ENCODE measurements at regions of chr13 and their contacts with region 1.

Region 1: DNA sequence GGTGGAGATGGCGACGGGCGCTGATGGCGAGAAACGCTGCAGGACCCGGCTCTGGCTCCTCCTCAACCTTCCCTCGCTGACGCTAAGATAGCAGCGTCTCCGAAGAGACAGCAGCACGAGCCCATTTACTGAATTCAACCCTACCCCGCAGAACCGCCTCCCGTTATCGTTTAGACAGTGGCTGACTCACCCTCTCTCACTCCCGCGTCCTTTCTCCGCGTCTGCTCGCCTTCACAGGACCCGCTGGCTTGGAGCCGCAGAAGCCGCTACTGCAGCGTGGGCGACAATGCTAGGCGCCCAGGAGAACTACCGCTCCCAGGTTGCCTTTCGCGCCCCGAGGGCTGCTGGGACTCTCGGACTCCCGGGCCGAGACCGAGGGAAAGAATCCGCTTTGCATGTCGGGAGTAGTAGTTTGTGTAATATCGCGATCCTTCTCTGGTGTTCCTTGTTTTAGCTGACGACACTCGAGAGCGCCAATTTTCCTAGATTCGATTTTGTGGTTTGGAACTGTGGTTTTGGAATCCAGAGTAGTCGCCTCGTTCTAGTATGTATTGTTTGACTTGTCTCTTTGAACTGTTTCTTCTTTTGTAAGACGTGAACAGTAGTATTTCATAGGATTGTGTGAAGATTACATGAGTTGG is at the start of gene KBTBD6:
- DNase-seq: peak; percentile 97
- H3K4me3 ChIP-seq: peak within 1 kb of the TSS; percentile 65 to 67
- H3K27ac ChIP-seq: peak within 1 kb of the TSS; percentile 79 to 80
- H3K4me1 ChIP-seq: peaks cover 3% of the 10 kb centered on the region
- H3K27me3 ChIP-seq: no peaks in the 10 kb centered on the region
- CTCF ChIP-seq: no peak
- POLR2A ChIP-seq: peak; percentile 47
- total RNA-seq, gene KBTBD6: 10.2 to 10.6 TPM

Region 2: DNA sequence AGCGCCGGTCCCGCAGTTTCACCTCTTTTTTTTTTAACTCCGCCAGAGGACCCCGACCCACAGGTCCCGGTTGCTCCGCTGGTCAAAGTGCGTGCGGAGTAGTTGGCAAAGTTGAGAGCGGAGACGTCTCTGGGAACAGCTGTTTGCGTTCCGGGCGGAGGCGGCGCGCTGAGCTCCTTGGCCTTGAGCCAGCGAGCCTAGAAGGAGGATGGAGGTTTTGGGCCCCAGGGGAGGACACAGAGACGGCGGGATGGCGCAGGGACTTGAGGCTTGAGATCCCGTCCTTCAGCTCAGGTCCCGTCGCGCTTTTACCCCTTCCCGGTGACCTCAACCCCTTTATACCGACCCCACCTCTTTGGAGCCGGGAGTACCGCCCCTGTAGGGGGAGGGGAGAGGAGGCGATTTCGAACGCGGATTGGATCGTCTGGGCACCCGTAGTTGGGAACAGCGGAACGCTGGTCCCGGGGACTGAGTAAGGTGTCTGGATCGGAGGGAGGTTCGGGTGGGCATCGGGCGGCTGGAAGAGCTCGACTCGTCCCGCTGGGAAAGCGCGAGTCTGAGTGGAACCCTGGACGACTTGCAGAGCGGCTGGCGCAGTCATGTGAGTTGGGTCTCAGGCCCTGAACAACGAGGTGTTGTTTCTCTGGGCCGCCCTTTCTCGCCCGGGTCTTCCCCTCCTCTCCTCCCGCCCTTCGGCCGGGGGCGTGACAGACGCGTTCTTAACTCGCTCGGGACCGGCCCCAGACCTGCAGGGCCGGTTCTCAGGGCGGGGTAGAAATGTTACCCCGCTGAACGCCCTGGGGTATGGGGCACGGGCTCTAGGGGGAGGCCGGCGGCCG is 71.3 kb before region 1 on chr13 and contains the start of gene WBP4:
- intact Hi-C with region 1: no loop called
- DNase-seq: peak; percentile 94
- H3K4me3 ChIP-seq: peak within 1 kb of the TSS; percentile 77 to 82
- H3K27ac ChIP-seq: peak within 1 kb of the TSS; percentile 97 to 98
- H3K4me1 ChIP-seq: peaks cover 11% of the 10 kb centered on the region
- H3K27me3 ChIP-seq: no peaks in the 10 kb centered on the region
- CTCF ChIP-seq: peak in 1 of 4 experiments; percentile 36
- POLR2A ChIP-seq: peak; percentile 48
- total RNA-seq, gene WBP4: 13.3 to 14.1 TPM

Region 3: DNA sequence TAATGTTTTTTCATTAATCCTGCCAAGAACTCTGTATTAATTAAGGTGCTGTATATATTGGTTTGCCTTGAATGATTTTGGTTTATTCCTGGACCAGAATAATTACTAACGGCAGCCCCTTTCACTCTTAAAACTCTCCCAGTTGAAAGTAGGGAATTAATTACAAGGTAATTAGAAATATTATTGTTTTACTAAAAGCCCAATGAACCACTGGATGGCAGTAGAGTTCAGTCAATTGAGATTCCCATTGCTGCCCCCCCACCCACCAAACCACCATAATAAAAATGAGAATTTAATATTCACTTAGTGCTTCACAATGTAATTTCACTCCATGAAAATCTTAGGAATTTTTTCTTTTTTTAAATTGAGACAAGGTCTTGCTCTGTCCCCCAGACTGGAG is 57.6 kb before region 1 on chr13:
- intact Hi-C with region 1: loop called (anchors 5 kb)
- DNase-seq: peak; percentile 14
- H3K4me3 ChIP-seq: no peak overlapping the region
- H3K27ac ChIP-seq: no peak overlapping the region
- H3K4me1 ChIP-seq: no peaks in the 10 kb centered on the region
- H3K27me3 ChIP-seq: no peaks in the 10 kb centered on the region
- CTCF ChIP-seq: peak in 3 of 4 experiments; percentile 47 to 59 (median 48)
- POLR2A ChIP-seq: no peak

Region 4: GRCh38 chr13:41193919-41194824 is 61.5 kb after region 1 on chr13 and contains the start of gene KBTBD7:
- intact Hi-C with region 1: loop called (anchors 2 kb)
- DNase-seq: peak; percentile 90
- H3K4me3 ChIP-seq: peak within 1 kb of the TSS; percentile 56 to 66
- H3K27ac ChIP-seq: peak within 1 kb of the TSS; percentile 81
- H3K4me1 ChIP-seq: peaks cover 2% of the 10 kb centered on the region
- H3K27me3 ChIP-seq: no peaks in the 10 kb centered on the region
- CTCF ChIP-seq: peak in 2 of 4 experiments; percentile 22 to 33
- POLR2A ChIP-seq: peak; percentile 50
- total RNA-seq, gene KBTBD7: 10.5 to 13.2 TPM

Region 5: DNA sequence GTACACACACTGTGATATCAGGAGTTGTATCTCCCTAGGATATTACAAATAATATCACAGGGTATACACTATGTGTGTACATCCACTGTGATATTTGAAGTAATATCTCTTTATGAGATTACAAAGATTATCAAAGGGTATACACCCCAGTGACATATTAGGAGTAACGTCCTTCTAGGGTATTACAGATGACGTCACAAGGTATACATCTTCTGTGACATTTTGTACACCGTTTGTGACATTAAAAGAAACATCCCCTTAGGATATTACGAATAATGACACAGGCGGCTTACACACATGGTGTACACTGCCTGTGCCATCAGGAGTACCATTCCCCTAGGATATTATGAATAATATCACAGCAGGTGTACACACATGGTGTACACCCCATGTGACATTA is 311.3 kb after region 1 on chr13:
- intact Hi-C with region 1: no loop called
- DNase-seq: no peak
- H3K4me3 ChIP-seq: no peak overlapping the region
- H3K27ac ChIP-seq: no peak overlapping the region
- H3K4me1 ChIP-seq: no peaks in the 10 kb centered on the region
- H3K27me3 ChIP-seq: no peaks in the 10 kb centered on the region
- CTCF ChIP-seq: no peak
- POLR2A ChIP-seq: no peak